Common myeloid progenitor, CD34-positive (primary cell): ENCODE measurements at regions of chr1 and their contacts with region 1.

Region 1: DNA sequence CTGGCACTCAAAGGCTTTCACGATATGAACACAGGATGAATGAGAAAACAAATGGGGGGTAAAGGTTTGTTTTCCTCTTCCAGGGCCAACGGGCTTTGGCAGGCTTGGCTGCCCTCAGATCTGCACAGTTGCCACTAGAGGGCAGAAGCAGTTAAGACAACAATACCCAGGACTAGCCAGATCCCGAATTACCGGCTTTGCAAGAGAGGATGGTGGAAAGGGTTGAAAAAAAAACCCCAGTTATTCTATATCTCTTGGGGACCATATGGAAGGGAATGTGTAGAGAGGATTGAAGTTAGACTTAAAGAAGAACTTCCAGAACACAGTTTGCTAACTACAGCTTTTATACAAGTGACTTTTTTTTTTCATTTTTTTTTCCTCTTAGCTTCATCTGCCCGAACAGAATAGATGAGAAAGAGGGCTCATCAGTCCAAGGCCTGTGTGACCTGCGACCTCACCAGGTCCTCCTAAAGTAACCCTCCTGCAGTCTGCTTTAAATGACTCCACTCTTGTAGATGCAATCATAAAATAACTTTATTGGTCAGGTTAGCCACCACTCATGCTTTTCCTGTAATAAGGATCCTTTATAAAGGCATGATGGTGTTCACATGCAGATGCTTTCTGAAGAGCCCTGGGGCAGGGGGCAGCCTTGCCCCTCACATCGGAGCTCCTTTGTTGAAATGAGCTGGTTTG is 10.7 kb downstream of the FMOD start:
- DNase-seq: peak; percentile 78 to 84 (median 82)
- H3K4me3 ChIP-seq: no peak overlapping the region
- H3K27ac ChIP-seq: no peak overlapping the region
- H3K4me1 ChIP-seq: peaks cover 0 to 5% (median 0%) of the 10 kb centered on the region in 4 experiments
- H3K27me3 ChIP-seq: peaks cover 0 to 22% (median 10%) of the 10 kb centered on the region in 5 experiments

Region 2: DNA sequence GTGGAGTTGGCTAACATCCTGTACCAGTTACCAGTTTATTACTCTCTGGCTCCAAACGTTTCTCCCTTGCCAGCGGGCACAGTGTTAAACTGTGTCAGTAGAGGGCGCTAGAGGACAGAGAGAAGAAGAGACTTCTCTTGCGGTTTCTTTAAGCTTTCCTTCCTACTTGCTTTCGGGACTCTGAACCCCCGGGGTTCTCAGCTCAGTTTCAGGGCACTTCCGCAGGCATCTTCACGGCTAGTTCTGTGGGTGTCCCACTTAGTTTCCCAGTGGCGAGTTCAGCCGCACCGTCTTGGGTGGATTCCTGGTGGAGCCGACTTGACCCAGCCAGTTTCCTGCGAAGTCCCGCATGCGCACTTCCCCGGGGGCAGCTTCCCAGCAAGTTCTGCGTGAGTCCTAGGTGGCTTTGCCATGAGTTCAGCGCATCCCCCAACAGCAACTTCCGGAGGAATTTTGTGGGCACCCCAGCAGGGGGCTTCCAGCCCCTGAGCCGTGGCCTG is 72.9 kb before region 1 on chr1:
- CTCF ChIA-PET with region 1: interaction called, 322 read pairs
- POLR2A ChIA-PET with region 1: no interaction called
- DNase-seq: peak; percentile 85 to 92 (median 89)
- H3K4me3 ChIP-seq: peak overlapping the region; percentile 41 to 82 (median 72)
- H3K27ac ChIP-seq: peak overlapping the region in 1 of 2 experiments; percentile 43
- H3K4me1 ChIP-seq: peaks cover 0 to 28% (median 20%) of the 10 kb centered on the region in 4 experiments
- H3K27me3 ChIP-seq: no peaks in the 10 kb centered on the region

Region 3: GRCh38 chr1:203299169-203299568 is 41.1 kb before region 1 on chr1:
- CTCF ChIA-PET with region 1: interaction called, 254 read pairs
- POLR2A ChIA-PET with region 1: no interaction called
- DNase-seq: no peak
- H3K4me3 ChIP-seq: no peak overlapping the region
- H3K27ac ChIP-seq: no peak overlapping the region
- H3K4me1 ChIP-seq: peaks cover 20 to 58% (median 39%) of the 10 kb centered on the region in 4 experiments
- H3K27me3 ChIP-seq: no peaks in the 10 kb centered on the region

Region 4: GRCh38 chr1:203326830-203327683 is 13.2 kb before region 1 on chr1:
- CTCF ChIA-PET with region 1: interaction called, 111 read pairs
- POLR2A ChIA-PET with region 1: interaction called, 5 read pairs
- DNase-seq: peak; percentile 94 to 98 (median 98)
- H3K4me3 ChIP-seq: peak overlapping the region in 5 of 7 experiments; percentile 35 to 63 (median 54)
- H3K27ac ChIP-seq: peak overlapping the region; percentile 75 to 88
- H3K4me1 ChIP-seq: peaks cover 32 to 70% (median 59%) of the 10 kb centered on the region in 4 experiments
- H3K27me3 ChIP-seq: no peaks in the 10 kb centered on the region

Region 5: DNA sequence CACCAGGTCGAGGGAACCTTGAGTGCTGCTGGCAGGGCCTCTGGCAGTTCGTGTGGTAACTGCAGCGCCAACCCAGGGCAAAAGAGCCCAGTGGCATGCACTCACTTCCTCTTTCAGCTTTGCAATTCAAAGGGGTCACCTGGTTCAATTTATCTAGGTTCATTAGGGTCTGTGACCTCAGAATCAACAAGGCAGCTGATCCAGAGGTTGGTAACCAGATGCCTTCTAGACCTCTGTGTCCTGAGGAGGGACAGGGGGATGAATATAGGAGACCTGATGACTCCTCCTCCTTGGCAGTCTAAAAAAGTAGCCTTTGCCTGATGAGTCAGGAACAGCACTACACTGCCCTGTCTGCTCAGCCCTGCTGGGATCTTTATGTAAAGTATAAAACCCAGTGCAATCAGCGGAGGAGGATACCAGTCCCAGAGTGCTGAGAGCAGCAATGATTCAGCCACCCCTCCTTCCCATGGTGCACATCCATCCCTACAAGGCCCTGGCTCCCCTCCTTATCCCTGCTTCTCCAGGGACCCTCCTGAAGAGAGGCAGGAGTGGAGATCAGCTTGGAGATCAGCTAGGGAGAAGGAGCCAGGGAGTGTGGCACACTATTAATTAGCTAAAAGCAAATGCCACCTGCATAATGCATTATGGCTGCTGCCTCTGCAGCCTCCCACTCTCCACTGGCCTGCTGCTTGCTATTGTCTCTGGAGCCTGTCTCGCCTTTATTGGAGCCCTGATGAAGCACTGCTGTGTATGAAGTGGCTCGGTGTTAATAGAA is 21.9 kb after region 1 on chr1:
- CTCF ChIA-PET with region 1: interaction called, 40 read pairs
- POLR2A ChIA-PET with region 1: no interaction called
- DNase-seq: peak in 2 of 3 donors; percentile 69 to 79
- H3K4me3 ChIP-seq: no peak overlapping the region
- H3K27ac ChIP-seq: no peak overlapping the region
- H3K4me1 ChIP-seq: peaks cover 0 to 3% (median 0%) of the 10 kb centered on the region in 4 experiments
- H3K27me3 ChIP-seq: peaks cover 0 to 18% (median 13%) of the 10 kb centered on the region in 5 experiments

Region 6: DNA sequence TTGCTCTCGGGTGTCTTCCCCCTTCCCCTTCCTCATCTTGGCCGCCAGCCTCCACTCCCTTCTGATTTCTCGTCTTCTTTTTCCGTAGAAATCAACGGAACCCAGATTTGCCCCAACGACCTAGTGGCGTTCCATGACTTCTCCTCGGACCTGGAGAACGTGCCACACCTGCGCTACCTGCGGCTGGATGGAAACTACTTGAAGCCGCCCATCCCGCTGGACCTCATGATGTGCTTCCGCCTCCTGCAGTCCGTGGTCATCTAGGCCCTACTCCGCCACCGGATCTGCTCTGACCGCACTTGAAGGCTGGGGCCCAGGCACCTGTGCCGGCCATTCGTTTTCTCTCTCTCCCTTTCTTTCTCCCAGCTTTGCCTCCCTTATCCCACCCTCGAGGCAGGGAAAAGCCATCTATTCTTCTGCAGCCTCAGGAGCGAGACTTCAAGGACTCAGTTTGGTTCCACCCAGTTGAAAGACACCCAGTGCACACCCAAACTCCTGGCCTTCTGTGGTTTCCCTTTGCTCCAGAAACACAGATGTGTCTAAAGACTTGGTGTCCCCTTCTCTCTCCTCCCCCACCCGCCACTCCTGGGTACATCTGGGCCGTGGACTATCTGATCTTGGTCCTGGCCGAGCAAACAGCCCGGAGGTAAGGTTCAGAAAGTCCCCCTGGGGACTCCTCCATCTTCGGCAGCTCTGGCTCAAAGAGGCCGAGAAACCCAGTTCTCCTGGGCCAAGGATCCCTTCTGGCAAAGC is 146.5 kb after region 1 on chr1:
- CTCF ChIA-PET with region 1: interaction called, 105 read pairs
- POLR2A ChIA-PET with region 1: interaction called, 4 read pairs
- DNase-seq: no peak
- H3K4me3 ChIP-seq: peak overlapping the region in 1 of 7 experiments; percentile 61
- H3K27ac ChIP-seq: no peak overlapping the region
- H3K4me1 ChIP-seq: peaks cover 0 to 9% (median 4%) of the 10 kb centered on the region in 4 experiments
- H3K27me3 ChIP-seq: no peaks in the 10 kb centered on the region

Region 7: GRCh38 chr1:203968728-203969127 is 628.5 kb after region 1 on chr1:
- CTCF ChIA-PET with region 1: no interaction called
- POLR2A ChIA-PET with region 1: no interaction called
- DNase-seq: no peak
- H3K4me3 ChIP-seq: no peak overlapping the region
- H3K27ac ChIP-seq: no peak overlapping the region
- H3K4me1 ChIP-seq: no peaks in the 10 kb centered on the region
- H3K27me3 ChIP-seq: no peaks in the 10 kb centered on the region